ENCODE measurements at regions of chr2 and their contacts with region 1.

Region 1: DNA sequence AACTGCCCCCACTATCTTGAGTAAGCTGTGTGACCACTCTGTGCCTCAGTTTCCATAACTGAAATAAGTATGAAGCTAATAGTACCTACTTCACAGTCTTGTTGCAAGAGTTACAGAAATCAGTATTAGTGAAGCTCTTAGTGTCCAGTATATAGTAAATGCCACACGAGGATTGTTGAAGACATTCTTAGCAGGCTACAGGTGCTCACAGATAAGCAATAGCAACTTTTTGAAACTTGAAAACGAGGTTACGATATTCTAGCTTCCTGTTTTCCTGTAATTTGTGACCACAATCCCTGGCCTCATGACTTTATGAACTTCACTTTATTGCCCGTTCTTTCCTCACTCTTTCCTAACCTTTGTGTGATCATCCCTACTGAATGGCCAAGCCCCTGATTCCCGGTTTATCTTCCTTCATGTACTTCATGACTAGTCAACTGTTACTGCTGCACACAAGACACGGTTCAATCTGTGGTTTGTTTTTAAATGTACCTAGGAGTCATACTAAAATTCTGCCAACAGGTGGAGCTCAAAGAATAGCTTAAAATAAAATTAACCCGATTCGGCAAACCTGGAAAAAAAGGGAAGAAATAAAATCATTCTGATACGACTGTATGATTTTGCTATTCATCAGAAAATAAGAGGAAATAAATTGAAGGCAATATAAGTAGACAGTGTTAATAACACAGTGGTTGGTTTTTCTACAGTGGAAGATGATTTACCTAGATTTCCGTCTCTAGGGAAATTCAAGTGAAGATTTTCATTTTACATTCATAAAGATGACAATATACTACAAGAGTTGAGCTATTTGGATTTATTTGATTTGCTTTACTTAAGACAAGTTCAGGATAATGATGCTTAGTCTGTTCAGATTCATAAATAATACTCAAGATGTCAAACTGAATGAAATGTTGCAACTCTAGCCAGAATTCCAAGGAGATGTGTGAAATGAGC is 38.1 kb upstream of the STAT1 start:
- DNase-seq: no peak
- ATAC-seq: no peak
- H3K4me3 ChIP-seq: no peak overlapping the region
- H3K27ac ChIP-seq: no peak overlapping the region
- H3K4me1 ChIP-seq: no peaks in the 10 kb centered on the region
- H3K27me3 ChIP-seq: no peaks in the 10 kb centered on the region

Region 2: DNA sequence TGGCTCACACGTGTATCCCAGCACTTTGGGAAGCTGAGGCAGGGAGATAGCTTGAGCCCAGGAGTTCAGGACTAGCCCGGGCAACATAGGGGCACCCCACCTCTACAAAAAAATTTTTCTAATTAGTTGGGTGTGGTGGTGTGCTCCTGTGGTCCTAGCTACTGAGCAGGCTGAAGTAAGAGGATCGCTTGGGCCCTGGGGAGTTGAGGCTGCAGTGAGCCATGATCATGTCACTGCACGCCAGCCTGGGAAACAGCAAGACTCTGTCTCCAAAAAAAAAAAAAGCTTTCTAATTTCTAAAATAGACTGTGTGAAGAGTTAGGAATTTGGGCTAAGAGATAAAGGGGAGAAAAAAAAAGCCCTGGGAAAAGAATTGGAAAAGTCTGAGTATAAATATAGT is 455.1 kb before region 1 on chr2:
- intact Hi-C with region 1: no loop called
- DNase-seq: peak in 1 of 2 donors; percentile 46
- ATAC-seq: no peak
- H3K4me3 ChIP-seq: no peak overlapping the region
- H3K27ac ChIP-seq: no peak overlapping the region
- H3K4me1 ChIP-seq: peaks cover 2 to 4% of the 10 kb centered on the region in 2 donors
- H3K27me3 ChIP-seq: no peaks in the 10 kb centered on the region

Region 3: GRCh38 chr2:191155608-191156071 is 103.5 kb after region 1 on chr2:
- intact Hi-C with region 1: loop called in 1 of 2 experiments (anchors 5 kb)
- DNase-seq: no peak
- ATAC-seq: peak; percentile 57
- H3K4me3 ChIP-seq: no peak overlapping the region
- H3K27ac ChIP-seq: no peak overlapping the region
- H3K4me1 ChIP-seq: no peaks in the 10 kb centered on the region
- H3K27me3 ChIP-seq: no peaks in the 10 kb centered on the region

Region 4: DNA sequence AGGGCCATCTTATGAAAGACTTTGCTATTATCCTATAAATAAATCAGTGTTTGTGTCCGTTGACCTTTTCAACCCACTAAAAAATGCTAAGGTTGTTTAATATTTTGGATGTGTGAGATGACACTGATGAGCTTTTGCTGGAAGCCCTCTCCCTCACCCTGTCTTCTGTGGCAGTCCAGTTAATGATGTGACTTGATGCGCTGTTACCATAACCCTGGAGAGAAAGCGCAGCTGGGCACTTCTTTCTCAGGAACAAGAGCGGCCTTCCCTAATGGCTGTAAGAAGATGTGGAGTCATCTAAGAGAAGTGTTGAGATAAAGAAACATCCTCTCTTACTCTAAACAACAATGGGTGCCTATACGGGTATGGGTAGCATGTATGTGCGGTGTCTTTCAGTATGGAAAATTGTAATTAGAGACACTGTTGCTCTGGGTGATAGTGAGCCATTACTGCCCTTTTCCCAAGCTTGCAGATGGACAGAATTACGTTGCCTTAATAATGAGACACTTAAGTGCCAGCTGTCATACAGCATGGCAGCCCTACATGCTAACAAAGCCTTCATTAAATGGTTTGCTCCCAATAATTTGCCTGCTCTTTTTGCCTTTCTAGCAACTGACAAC is 460.2 kb after region 1 on chr2:
- intact Hi-C with region 1: loop called (anchors 10 kb)
- DNase-seq: no peak
- ATAC-seq: no peak
- H3K4me3 ChIP-seq: no peak overlapping the region
- H3K27ac ChIP-seq: no peak overlapping the region
- H3K4me1 ChIP-seq: no peaks in the 10 kb centered on the region
- H3K27me3 ChIP-seq: peaks cover 0 to 4% of the 10 kb centered on the region in 2 donors

Measured in aorta (tissue), 5 donors.